GM12878 (cell line): ENCODE measurements at regions of chr12 and their contacts with region 1.

Region 1: DNA sequence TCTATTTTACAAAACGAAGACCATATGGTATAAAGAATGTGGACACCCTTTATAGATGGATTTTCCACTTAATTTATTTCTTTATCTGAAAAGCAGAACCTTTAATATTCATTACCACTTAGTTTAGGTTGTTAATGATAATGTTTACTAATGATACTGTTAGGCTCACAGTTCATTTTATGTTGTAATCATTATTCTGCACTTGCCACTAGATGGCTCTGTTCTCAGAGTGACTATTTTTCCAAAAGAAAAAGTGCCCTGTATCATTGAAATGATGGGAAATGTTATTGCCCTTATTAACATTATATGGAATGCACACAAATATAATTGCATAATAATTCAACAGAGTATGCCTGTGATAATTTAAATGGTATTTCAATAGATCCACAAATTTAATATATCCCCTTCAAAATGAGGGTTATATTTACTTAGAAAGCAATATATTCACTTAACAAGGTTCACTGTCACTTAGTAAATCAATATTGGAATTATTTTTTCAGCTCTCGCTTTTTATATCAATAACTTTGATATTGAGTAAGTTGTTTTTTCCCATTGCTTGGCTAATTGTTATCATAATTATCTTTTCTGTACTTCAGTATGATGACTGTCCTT is 95.7 kb downstream of the PDE3A start:
- DNase-seq: no peak
- ATAC-seq: 0 out of 3 replicates have a peak, but pooled peaks have one; percentile 41
- H3K4me3 ChIP-seq: no peak overlapping the region
- H3K27ac ChIP-seq: no peak overlapping the region
- H3K4me1 ChIP-seq: no peaks in the 10 kb centered on the region
- H3K27me3 ChIP-seq: no peaks in the 10 kb centered on the region
- CTCF ChIP-seq: peak; percentile 37 to 47 (median 46); a peak in 4 of 6 replicates
- EP300 ChIP-seq: no peak
- POLR2A ChIP-seq: no peak
- RAD21 ChIP-seq: peak; percentile 38

Region 2: GRCh38 chr12:20507711-20508110 is 43.7 kb after region 1 on chr12:
- CTCF ChIA-PET with region 1: no interaction called
- POLR2A ChIA-PET with region 1: no interaction called
- RAD21 ChIA-PET with region 1: no interaction called
- SMC1A ChIA-PET with region 1: no interaction called
- in situ Hi-C with region 1: no loop called
- intact Hi-C with region 1: no loop called
- DNase-seq: no peak
- ATAC-seq: no peak
- H3K4me3 ChIP-seq: no peak overlapping the region
- H3K27ac ChIP-seq: no peak overlapping the region
- H3K4me1 ChIP-seq: no peaks in the 10 kb centered on the region
- H3K27me3 ChIP-seq: no peaks in the 10 kb centered on the region
- CTCF ChIP-seq: no peak
- EP300 ChIP-seq: no peak
- POLR2A ChIP-seq: no peak
- RAD21 ChIP-seq: no peak

Region 3: DNA sequence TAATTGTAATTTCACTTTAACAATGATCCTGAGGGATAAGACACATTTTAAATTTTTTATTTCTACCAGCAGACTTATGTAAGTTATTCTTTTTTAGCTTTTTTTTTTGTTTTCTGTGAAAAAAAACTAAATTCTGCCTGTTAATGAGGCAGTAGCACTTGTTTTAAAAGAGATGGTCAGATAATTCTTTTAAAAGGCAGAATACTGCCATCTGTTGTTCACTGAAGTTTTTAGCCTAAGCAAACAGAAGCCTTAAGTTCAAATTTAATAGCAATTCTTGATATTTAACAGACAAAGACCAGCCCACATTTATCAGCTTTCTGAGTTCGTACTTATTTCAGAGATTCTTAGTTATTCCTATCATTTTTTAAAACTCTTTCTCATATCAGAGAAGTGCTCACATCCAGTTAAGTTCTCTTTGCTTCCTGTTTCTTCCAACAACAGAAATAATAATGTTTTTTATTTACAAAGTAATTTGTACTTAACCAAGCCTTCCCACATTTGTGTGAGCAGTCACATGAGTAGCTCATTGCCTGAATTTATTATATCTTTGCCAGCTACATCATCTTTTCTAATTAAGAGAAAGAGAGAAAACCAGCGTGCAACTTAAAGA is 137.8 kb after region 1 on chr12:
- CTCF ChIA-PET with region 1: interaction called, 5 read pairs
- POLR2A ChIA-PET with region 1: no interaction called
- RAD21 ChIA-PET with region 1: no interaction called
- SMC1A ChIA-PET with region 1: no interaction called
- in situ Hi-C with region 1: no loop called
- intact Hi-C with region 1: loop called (anchors 2 kb)
- DNase-seq: no peak
- ATAC-seq: no peak
- H3K4me3 ChIP-seq: no peak overlapping the region
- H3K27ac ChIP-seq: no peak overlapping the region
- H3K4me1 ChIP-seq: no peaks in the 10 kb centered on the region
- H3K27me3 ChIP-seq: no peaks in the 10 kb centered on the region
- CTCF ChIP-seq: peak in 1 of 3 experiments; percentile 41; a peak in 1 of 6 replicates
- EP300 ChIP-seq: no peak
- POLR2A ChIP-seq: no peak
- RAD21 ChIP-seq: peak; percentile 32; the same call in 1 of the 2 replicates

Region 4: DNA sequence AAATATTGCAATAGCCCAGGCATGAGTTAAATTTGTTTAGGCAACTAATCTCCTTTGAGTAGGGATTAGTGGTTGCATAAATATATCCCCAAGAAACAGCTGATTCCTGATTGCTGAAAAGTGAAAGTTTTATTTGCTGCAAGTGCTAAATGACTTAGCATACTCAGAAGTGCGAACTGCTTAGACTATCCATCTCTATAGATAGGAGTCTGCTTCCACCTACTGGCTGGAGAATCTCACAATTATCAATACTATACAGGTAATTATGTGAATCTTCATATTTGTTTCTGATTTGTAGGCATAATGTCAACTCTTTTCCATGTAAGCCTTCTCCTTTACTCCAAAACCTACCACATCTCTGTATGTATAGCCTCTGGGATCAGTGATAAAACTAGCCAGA is 334.5 kb after region 1 on chr12:
- CTCF ChIA-PET with region 1: no interaction called
- POLR2A ChIA-PET with region 1: no interaction called
- RAD21 ChIA-PET with region 1: no interaction called
- SMC1A ChIA-PET with region 1: no interaction called
- in situ Hi-C with region 1: no loop called
- intact Hi-C with region 1: loop called (anchors 5 kb)
- DNase-seq: no peak
- ATAC-seq: peak; percentile 63; the same call in 2 of the 3 replicates
- H3K4me3 ChIP-seq: no peak overlapping the region
- H3K27ac ChIP-seq: no peak overlapping the region
- H3K4me1 ChIP-seq: no peaks in the 10 kb centered on the region
- H3K27me3 ChIP-seq: no peaks in the 10 kb centered on the region
- CTCF ChIP-seq: peak in 1 of 3 experiments; percentile 40; a peak in 2 of 6 replicates
- EP300 ChIP-seq: no peak
- POLR2A ChIP-seq: no peak
- RAD21 ChIP-seq: peak; percentile 47; the same call in 1 of the 2 replicates

Region 5: DNA sequence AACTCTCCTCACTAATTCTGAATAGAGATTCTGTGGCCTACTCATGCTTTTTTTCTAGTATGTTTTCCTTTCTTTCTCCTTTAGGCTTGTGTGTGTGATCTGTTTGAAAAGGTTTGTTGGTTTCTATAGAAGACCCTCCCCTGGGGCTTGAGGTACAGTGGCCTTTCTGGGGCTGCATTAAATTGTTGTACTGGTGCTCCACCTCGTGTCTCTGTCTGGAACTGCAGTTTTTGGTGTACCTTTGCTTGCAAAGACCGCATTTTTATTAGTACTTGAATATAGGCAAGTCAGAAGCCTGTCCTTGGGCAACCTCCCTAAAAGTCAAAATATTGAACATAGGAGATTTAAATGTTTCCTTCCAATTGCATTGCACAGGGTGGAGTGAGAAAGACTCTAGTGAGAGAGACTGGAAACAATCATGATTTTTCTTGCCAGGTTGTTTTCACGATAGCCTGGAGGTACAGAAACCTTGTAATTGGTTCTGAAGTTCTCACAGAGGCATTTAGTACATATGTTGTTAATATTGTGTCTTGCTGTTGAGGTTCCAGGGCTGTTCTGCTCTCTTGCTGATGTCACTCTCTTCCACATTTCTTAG is 706.0 kb after region 1 on chr12:
- CTCF ChIA-PET with region 1: no interaction called
- POLR2A ChIA-PET with region 1: no interaction called
- RAD21 ChIA-PET with region 1: no interaction called
- SMC1A ChIA-PET with region 1: no interaction called
- in situ Hi-C with region 1: no loop called
- intact Hi-C with region 1: loop called (anchors 10 kb)
- DNase-seq: no peak
- ATAC-seq: peak; percentile 68
- H3K4me3 ChIP-seq: no peak overlapping the region
- H3K27ac ChIP-seq: no peak overlapping the region
- H3K4me1 ChIP-seq: no peaks in the 10 kb centered on the region
- H3K27me3 ChIP-seq: no peaks in the 10 kb centered on the region
- CTCF ChIP-seq: peak; percentile 71 to 77 (median 71)
- EP300 ChIP-seq: no peak
- POLR2A ChIP-seq: no peak
- RAD21 ChIP-seq: peak; percentile 78